ENCODE measurements at regions of chr5 and their contacts with region 1.

Region 1: DNA sequence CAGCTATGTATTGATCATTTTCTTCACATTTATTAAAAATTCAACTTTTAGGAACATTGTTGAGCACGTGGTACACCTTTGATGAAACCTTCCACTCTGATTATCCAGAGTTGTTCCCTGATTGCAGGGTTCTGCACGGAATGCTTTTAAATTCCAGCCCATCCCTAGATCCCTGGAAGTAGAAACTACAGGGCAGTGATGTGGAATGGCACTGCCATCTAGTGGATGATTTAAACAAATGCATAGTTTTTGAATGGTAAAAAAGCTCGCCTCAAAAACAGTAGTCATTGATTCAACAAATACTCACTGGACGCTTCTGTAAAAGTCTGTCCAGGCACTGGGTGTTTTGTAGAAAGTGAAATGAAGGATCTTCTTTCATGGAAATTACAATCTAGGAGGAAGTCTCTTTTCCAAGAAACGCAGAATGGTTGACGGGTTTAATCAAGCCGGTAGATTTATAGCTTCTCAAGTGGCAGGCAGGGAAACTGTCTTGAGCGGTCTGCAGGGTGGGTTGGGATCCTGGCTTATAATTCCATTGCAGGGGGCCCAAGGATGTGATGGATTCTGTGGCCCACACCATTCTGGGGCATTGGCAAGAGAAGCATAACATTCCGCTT is 118.4 kb downstream of the ARHGAP26 start:
- DNase-seq: no peak
- H3K4me3 ChIP-seq: no peak overlapping the region
- H3K27ac ChIP-seq: no peak overlapping the region
- H3K4me1 ChIP-seq: peaks cover 0 to 11% (median 0%) of the 10 kb centered on the region in 4 experiments; a peak in 1 of 7 replicates
- H3K27me3 ChIP-seq: no peaks in the 10 kb centered on the region
- CTCF ChIP-seq: peak in 2 of 3 experiments; percentile 61 to 69; a peak in 2 of 4 replicates
- EP300 ChIP-seq: no peak
- POLR2A ChIP-seq: no peak
- RAD21 ChIP-seq: peak; percentile 89 to 91

Region 2: GRCh38 chr5:142605611-142606010 is 283.0 kb before region 1 on chr5:
- CTCF ChIA-PET with region 1: interaction called, 10 read pairs
- POLR2A ChIA-PET with region 1: no interaction called
- DNase-seq: no peak
- H3K4me3 ChIP-seq: no peak overlapping the region
- H3K27ac ChIP-seq: no peak overlapping the region
- H3K4me1 ChIP-seq: no peaks in the 10 kb centered on the region; a peak in 1 of 7 replicates
- H3K27me3 ChIP-seq: no peaks in the 10 kb centered on the region
- CTCF ChIP-seq: no peak
- EP300 ChIP-seq: no peak
- POLR2A ChIP-seq: no peak
- RAD21 ChIP-seq: no peak

Region 3: DNA sequence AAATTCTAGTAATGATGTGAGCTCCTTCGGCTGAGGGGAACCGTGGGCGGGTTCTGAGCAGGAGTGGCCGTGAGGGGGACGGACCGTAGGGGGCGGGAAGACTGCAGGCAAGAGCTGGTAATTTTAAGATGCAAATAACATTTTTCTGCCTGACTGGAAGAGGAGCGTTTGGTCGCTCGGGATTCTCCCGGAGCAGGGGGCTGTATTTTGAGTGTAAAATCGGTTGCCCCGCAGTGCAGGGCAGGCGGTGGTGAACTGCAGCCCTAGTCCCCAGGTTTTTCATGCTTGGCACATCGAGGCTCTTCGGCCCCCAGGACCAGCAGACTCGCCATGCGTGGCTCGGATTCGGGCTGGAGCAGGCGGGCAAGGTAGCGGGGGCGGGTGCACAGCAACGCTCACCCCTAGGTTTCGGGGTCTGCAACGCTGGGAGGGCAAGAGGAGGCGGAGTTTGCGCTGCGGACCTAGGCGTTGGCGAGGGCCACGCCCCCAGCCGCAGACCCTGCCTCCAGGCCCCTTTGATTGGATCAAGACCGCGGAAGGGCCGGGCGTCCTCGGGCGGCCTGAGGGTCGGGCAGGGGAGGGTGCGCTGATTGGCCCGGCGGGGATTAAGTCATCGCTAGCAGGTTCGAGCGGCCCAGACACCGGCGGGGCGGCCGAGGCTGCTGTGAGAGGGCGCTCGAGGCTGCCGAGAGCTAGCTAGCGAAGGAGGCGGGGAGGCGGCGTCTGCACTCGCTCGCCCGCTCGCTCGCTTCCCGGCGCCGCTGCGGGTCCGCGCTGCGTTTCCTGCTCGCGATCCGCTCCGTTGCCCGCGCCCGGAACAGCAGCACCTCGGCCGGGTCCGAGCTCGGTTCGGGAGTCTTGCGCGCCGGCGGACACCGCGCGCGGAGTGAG is 118.6 kb before region 1 on chr5 and contains the start of gene ARHGAP26:
- CTCF ChIA-PET with region 1: interaction called, 79 read pairs
- POLR2A ChIA-PET with region 1: no interaction called
- DNase-seq: peak; percentile 93 to 94
- H3K4me3 ChIP-seq: peak within 1 kb of the TSS; percentile 77 to 91 (median 83)
- H3K27ac ChIP-seq: no peak within 1 kb of the TSS; the same call in 1 of the 2 replicates
- H3K4me1 ChIP-seq: peaks cover 0 to 10% (median 5%) of the 10 kb centered on the region in 4 experiments; a peak in 6 of 7 replicates
- H3K27me3 ChIP-seq: peaks cover 0 to 8% (median 2%) of the 10 kb centered on the region in 4 experiments; a peak in 4 of 7 replicates
- CTCF ChIP-seq: peak in 2 of 3 experiments; percentile 16 to 17; a peak in 3 of 4 replicates
- EP300 ChIP-seq: no peak
- POLR2A ChIP-seq: peak; percentile 85 to 87
- RAD21 ChIP-seq: peak; percentile 11 to 25; a peak in 2 of 4 replicates
- total RNA-seq, gene ARHGAP26: 20.6 and 24.8 TPM in 2 replicates

Region 4: GRCh38 chr5:142874537-142874936 is 14.0 kb before region 1 on chr5:
- CTCF ChIA-PET with region 1: interaction called, 52 read pairs
- POLR2A ChIA-PET with region 1: no interaction called
- DNase-seq: no peak
- H3K4me3 ChIP-seq: no peak overlapping the region
- H3K27ac ChIP-seq: no peak overlapping the region
- H3K4me1 ChIP-seq: peaks cover 0 to 3% (median 2%) of the 10 kb centered on the region in 4 experiments; a peak in 2 of 7 replicates
- H3K27me3 ChIP-seq: no peaks in the 10 kb centered on the region
- CTCF ChIP-seq: no peak
- EP300 ChIP-seq: no peak
- POLR2A ChIP-seq: no peak
- RAD21 ChIP-seq: no peak

Region 5: GRCh38 chr5:142900927-142901326 is 12.3 kb after region 1 on chr5:
- CTCF ChIA-PET with region 1: interaction called, 18 read pairs
- POLR2A ChIA-PET with region 1: no interaction called
- DNase-seq: no peak
- H3K4me3 ChIP-seq: no peak overlapping the region
- H3K27ac ChIP-seq: no peak overlapping the region; the same call in 1 of the 2 replicates
- H3K4me1 ChIP-seq: peaks cover 5 to 14% (median 11%) of the 10 kb centered on the region in 4 experiments; a peak in 6 of 7 replicates
- H3K27me3 ChIP-seq: no peaks in the 10 kb centered on the region
- CTCF ChIP-seq: no peak
- EP300 ChIP-seq: no peak
- POLR2A ChIP-seq: no peak
- RAD21 ChIP-seq: no peak

Region 6: DNA sequence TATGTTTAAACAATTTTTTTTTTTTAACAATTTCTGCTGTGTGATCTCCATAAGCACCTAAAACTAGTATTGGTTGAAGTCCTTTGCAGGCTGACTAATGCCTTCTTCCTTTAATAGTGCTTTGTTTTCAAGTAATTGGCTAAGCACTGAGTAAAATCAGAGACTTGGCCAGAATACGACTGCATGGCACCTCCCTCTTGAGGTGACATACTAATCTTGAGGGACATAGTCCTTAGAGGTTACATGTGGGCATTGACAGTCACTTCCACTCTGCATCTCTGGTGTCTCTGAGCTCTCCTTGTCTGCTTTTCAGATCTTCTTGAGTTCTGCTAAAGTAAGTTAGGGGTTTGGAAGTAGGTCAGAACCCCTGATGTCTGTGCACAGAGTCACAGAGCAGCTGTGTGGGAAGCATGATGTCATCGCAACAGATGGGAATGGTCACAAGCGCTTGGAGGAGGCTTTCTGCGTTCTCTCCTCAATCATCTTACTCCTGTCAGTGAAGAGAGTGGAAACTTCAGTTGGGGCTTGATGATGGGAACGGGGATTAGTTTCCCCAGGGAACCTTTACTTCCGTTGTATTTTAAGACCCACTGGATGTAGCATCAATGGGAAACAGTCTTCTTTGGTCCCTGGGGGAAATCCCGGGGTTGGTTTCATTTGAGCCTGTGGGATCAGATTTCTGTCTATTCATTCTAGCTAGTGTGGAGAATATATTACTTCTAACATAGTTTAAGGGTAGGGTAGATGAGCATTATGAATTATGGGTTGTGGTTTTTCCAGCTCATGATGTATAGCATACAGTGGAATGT is 18.5 kb after region 1 on chr5:
- CTCF ChIA-PET with region 1: interaction called, 98 read pairs
- POLR2A ChIA-PET with region 1: no interaction called
- DNase-seq: no peak
- H3K4me3 ChIP-seq: no peak overlapping the region
- H3K27ac ChIP-seq: no peak overlapping the region
- H3K4me1 ChIP-seq: peaks cover 0 to 6% (median 3%) of the 10 kb centered on the region in 4 experiments; a peak in 3 of 7 replicates
- H3K27me3 ChIP-seq: no peaks in the 10 kb centered on the region
- CTCF ChIP-seq: no peak
- EP300 ChIP-seq: no peak
- POLR2A ChIP-seq: no peak
- RAD21 ChIP-seq: no peak

Region 7: GRCh38 chr5:143008809-143009521 is 120.4 kb after region 1 on chr5:
- CTCF ChIA-PET with region 1: no interaction called
- POLR2A ChIA-PET with region 1: no interaction called
- DNase-seq: no peak
- H3K4me3 ChIP-seq: no peak overlapping the region
- H3K27ac ChIP-seq: no peak overlapping the region
- H3K4me1 ChIP-seq: no peaks in the 10 kb centered on the region
- H3K27me3 ChIP-seq: no peaks in the 10 kb centered on the region
- CTCF ChIP-seq: no peak
- EP300 ChIP-seq: no peak
- POLR2A ChIP-seq: no peak
- RAD21 ChIP-seq: no peak

Region 8: DNA sequence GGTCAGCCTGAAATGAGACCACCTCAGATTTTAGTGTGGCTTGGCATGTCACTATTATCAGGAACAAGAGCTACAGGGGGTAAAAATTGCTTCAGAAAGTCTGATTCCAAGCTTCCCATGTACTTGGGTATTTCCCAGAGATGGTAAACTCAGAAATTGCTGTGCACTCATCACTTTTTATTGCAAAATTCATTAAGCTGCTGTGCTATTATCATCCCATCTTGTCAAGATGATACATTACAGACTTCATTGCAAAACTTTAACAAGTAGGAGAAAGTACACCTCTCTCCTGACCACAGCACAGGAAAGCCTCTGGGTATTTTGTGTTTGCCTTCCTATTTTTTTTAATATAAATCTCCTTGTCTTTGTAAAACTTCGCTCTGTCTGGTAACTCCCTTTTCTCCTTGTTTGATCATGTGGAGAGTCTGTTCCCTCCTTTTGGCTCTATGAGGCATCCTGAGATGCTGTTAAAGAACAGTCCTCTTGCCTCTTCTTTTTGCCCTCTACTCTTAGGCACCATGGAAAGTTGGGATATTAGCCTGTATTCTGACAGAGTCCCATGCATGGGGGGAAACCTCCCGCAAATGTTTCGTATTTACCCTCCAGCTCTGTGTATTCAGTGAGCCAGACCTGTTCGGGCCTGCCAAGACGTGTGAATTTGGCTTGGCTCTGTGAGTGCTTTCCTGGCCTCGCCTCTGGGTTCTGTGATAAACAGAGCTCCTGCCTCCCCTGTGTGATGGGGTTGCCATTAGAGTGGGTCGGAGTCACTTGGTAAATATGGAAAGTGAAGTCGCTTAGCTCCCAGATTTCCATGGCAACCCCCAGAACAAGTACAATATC is 254.2 kb after region 1 on chr5:
- CTCF ChIA-PET with region 1: no interaction called
- POLR2A ChIA-PET with region 1: no interaction called
- DNase-seq: no peak
- H3K4me3 ChIP-seq: no peak overlapping the region
- H3K27ac ChIP-seq: no peak overlapping the region
- H3K4me1 ChIP-seq: no peaks in the 10 kb centered on the region
- H3K27me3 ChIP-seq: no peaks in the 10 kb centered on the region
- CTCF ChIP-seq: no peak
- EP300 ChIP-seq: no peak
- POLR2A ChIP-seq: no peak
- RAD21 ChIP-seq: no peak